SK-N-SH (cell line): ENCODE measurements at regions of chr6 and their contacts with region 1.

Region 1: GRCh38 chr6:43856005-43856765 is 86.2 kb downstream of the VEGFA start:
- DNase-seq: peak; percentile 74
- H3K4me3 ChIP-seq: no peak overlapping the region
- H3K27ac ChIP-seq: peak overlapping the region in 1 of 2 experiments; percentile 92; a peak in 2 of 4 replicates
- H3K4me1 ChIP-seq: peaks cover 0 to 41% of the 10 kb centered on the region in 2 experiments; a peak in 1 of 4 replicates
- H3K27me3 ChIP-seq: no peaks in the 10 kb centered on the region
- CTCF ChIP-seq: peak; percentile 42
- EP300 ChIP-seq: no peak
- RAD21 ChIP-seq: peak; percentile 74

Region 2: GRCh38 chr6:43809417-43810291 is 46.5 kb before region 1 on chr6:
- CTCF ChIA-PET with region 1: no interaction called
- POLR2A ChIA-PET with region 1: no interaction called
- DNase-seq: no peak
- H3K4me3 ChIP-seq: no peak overlapping the region
- H3K27ac ChIP-seq: no peak overlapping the region
- H3K4me1 ChIP-seq: peaks cover 0 to 33% of the 10 kb centered on the region in 2 experiments; a peak in 1 of 4 replicates
- H3K27me3 ChIP-seq: no peaks in the 10 kb centered on the region
- CTCF ChIP-seq: no peak
- EP300 ChIP-seq: no peak
- RAD21 ChIP-seq: no peak

Region 3: DNA sequence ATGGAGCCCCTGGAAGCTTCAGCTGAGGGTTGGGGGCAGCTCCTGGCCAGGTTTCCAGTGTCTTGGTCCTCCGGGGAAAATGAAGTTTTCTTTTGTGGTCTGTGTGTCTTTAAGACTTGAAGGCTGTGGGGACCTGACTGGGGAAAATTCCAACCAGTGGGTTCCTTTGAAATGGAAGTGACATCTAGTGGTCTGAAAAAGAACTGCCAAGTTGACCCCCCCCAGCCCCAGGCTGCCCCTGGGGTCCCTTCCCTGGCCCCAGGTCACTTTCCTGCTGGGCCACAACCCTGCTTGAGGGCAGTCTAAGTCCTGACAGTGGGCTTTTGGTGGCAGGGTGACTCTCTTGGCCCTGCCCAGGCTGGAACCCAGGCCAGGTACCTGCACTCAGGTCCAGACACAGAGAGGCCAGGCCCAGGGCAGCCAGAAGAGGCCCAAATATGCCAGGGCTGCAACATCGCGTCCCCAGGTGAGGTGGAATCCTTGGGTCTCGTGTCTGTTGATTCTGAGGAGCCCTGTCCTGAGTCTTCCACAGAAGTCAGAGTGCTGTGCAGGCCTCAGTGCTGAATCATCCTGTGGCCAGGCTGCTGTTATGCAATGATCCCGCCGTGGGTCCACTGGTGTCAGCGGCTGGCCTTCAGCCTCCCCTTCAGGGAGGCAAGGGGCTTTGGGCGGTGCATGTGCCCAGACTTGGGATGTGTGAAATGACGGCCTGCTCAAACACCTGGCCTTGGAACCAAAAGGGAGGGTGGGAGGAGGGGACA is 17.7 kb before region 1 on chr6:
- CTCF ChIA-PET with region 1: interaction called, 10 read pairs
- POLR2A ChIA-PET with region 1: no interaction called
- DNase-seq: peak; percentile 62
- H3K4me3 ChIP-seq: no peak overlapping the region
- H3K27ac ChIP-seq: peak overlapping the region in 1 of 2 experiments; percentile 9; a peak in 1 of 4 replicates
- H3K4me1 ChIP-seq: peaks cover 3 to 27% of the 10 kb centered on the region in 2 experiments; a peak in 2 of 4 replicates
- H3K27me3 ChIP-seq: no peaks in the 10 kb centered on the region
- CTCF ChIP-seq: peak; percentile 60
- EP300 ChIP-seq: no peak
- RAD21 ChIP-seq: peak; percentile 60

Region 4: GRCh38 chr6:43910638-43911353 is 54.6 kb after region 1 on chr6:
- CTCF ChIA-PET with region 1: interaction called, 16 read pairs
- POLR2A ChIA-PET with region 1: no interaction called
- DNase-seq: no peak
- H3K4me3 ChIP-seq: no peak overlapping the region
- H3K27ac ChIP-seq: peak overlapping the region in 1 of 2 experiments; percentile 36; a peak in 1 of 4 replicates
- H3K4me1 ChIP-seq: peaks cover 24 to 75% of the 10 kb centered on the region in 2 experiments
- H3K27me3 ChIP-seq: no peaks in the 10 kb centered on the region
- CTCF ChIP-seq: no peak
- EP300 ChIP-seq: no peak
- RAD21 ChIP-seq: no peak

Region 5: GRCh38 chr6:43926634-43927524 is 70.7 kb after region 1 on chr6:
- CTCF ChIA-PET with region 1: interaction called, 13 read pairs
- POLR2A ChIA-PET with region 1: interaction called, 4 read pairs
- DNase-seq: peak; percentile 81
- H3K4me3 ChIP-seq: no peak overlapping the region
- H3K27ac ChIP-seq: peak overlapping the region; percentile 27 to 98; a peak in 3 of 4 replicates
- H3K4me1 ChIP-seq: peaks cover 40 to 82% of the 10 kb centered on the region in 2 experiments
- H3K27me3 ChIP-seq: no peaks in the 10 kb centered on the region
- CTCF ChIP-seq: no peak
- EP300 ChIP-seq: peak in 1 of 2 experiments; percentile 51; a peak in 2 of 4 replicates
- RAD21 ChIP-seq: peak; percentile 34